Motor neuron (in vitro differentiated cells): ENCODE measurements at regions of chr12 and their contacts with region 1.

Region 1: GRCh38 chr12:91811481-91812287 is 334.0 kb downstream of the BTG1 start:
- ATAC-seq: peak in 7 of 8 experiments; percentile 40 to 65 (median 47)
- H3K4me3 ChIP-seq: no peak overlapping the region
- H3K27ac ChIP-seq: no peak overlapping the region
- H3K4me1 ChIP-seq: no peaks in the 10 kb centered on the region

Region 2: DNA sequence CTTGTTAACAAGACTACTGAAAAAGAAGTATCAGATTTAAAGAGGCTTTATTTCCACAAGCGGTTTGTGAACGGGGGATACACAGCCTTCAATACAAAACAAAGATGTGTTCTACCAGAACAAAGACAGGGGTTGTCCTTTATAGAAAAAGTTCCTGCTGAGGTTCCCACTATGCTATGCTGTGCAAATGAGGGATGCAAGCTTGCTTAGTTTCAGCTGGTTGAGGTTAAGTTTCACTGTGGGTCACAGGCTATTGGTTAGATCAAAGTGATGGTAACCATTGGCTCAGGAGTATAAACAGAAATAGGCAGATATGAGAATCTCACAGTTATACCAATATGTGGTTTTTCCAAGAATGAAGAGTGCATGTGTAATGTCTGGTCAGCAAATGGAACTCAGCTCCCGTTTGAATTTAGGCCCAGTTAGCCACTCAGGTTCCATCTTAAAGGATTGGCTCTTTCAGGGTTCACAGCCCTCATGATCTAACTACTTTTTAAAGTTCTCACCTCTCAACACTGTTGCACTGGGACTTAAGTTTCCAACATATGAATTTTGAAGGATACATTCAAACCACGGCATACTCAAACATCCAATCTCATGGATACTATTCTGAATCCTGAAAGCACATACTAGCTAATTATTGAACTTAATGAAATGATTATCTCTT is 413.7 kb before region 1 on chr12:
- in situ Hi-C with region 1: loop called in 1 of 9 experiments (anchors 10 kb)
- ATAC-seq: no peak
- H3K4me3 ChIP-seq: no peak overlapping the region
- H3K27ac ChIP-seq: no peak overlapping the region
- H3K4me1 ChIP-seq: no peaks in the 10 kb centered on the region

Region 3: DNA sequence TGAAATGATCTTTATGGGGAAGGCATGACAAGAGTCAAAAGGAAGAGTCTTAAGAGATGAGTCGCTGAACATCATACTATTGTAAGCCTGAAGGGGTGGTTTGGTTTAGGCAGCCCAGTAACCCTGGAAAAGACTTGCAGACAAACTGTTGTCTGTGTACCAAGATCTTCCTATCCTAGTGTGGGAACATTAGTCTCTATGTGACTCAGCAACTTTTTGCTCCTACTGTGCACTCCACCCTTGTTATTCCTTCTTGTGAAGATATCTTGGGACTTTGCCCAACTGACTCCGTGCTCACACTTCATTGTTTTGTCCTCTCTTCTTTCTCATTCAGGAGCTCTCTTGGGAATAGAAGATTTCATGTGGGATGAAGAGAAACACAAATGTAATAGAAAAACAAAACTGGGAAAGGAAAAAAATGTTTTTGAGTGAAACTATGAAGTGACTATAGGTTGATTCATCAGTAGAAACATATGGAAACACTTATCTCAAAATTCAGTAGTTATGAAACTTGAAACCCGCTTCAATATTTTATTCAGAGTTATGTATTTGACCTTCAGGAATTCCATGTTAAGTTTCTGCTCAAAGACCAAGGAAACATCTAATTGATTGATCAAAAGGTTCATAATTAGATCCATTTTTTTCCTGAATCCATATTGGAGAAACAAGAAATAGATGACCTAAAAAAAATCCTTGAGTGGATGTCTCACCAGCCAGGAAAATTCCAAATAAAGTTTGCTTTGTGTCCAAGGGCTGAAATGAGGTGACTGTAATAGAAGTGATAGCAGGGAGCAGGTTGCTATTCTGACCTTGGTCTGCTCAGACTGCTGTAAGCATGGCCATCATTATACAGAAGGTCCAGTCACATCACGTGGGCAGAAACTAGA is 266.7 kb after region 1 on chr12:
- in situ Hi-C with region 1: loop called in 1 of 9 experiments (anchors 25 kb)
- ATAC-seq: peak in 3 of 8 experiments; percentile 36 to 68 (median 55)
- H3K4me3 ChIP-seq: no peak overlapping the region
- H3K27ac ChIP-seq: no peak overlapping the region
- H3K4me1 ChIP-seq: peaks cover 18 to 20% of the 10 kb centered on the region in 2 donors

Region 4: DNA sequence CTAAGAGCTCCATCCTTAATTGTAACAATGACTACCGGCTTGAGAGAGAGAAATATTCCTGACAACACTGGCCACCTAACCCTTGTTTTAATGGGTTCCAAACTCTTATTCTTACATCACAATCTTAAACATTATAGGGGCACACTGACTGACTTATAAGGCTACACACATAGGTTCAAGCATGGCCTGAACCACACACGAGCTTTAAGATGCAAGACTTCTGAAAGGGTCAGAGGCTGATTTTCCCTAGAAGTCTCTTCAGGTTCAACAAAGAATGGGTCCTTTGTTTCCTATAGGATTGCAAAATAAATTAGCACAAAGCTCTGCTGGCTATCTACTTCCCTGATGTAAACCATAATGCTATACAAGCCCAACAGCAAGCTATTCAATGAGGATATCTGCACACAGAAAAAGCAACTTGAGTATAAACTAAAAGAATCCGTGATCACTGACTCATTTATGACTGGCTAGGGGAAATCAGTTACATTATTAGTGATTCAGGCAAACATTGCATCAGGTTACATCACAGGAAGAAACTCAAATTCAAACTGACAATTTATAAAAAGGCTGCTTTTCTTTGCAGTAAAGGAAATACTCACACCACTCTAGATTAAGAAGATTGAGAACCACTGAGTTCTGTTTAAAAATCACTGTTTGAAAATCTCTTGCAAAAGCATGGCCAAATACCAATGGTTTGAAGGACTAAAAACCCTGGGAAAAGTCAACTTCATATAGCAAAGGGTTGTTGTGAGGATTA is 325.5 kb after region 1 on chr12:
- in situ Hi-C with region 1: loop called in 4 of 9 experiments (anchors 10 to 25 kb)
- ATAC-seq: peak in 5 of 8 experiments; percentile 48 to 79 (median 64)
- H3K4me3 ChIP-seq: peak overlapping the region; percentile 54 to 79 (median 76)
- H3K27ac ChIP-seq: peak overlapping the region; percentile 86 to 94
- H3K4me1 ChIP-seq: peaks cover 44 to 46% of the 10 kb centered on the region in 2 donors

Region 5: DNA sequence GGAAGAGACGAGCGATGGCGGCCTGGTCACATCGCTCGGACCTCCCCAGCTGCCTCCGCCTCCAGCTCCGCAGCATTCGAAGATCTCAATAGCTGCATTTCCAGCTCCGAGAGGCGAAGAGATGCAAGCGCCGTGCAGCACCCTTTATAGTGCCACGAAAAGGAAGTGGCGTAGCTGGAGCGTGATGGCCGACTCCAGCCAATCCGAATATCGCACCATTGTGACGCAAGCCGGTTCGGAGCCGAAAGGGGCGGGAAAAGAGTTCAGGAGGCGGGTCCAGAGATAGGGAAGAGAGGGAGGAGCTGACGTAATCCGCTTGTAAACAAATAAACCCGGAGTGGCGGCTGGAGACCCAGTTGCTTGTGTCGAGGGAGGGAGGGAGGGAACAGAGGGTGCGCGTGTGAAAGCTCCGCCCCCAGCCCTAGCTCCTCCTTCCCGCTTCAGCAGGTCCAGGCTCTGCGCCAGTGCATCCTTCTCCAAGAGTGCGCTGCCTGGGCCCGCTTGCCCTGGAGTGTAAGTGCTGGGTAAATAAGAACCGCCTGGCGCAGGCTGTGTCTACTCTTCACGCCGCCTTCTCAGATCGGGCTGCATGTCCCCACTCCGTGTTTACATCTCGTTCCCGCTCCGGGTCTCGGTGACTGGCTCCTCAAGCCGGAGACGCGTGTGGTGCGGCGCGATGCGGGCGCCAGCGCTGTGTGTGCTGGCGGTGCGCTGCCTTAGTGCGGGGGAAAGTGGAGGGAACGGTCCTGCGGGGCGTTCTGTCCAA is 334.2 kb after region 1 on chr12 and contains the start of gene BTG1:
- in situ Hi-C with region 1: loop called in 3 of 9 experiments (anchors 25 kb)
- ATAC-seq: peak; percentile 76 to 86 (median 82)
- H3K4me3 ChIP-seq: peak within 1 kb of the TSS; percentile 57 to 83 (median 79)
- H3K27ac ChIP-seq: peak within 1 kb of the TSS; percentile 86 to 90
- H3K4me1 ChIP-seq: peaks cover 0 to 5% of the 10 kb centered on the region in 2 donors
- total RNA-seq, gene BTG1: 33.1 to 161 (median 68.2) TPM